B cell (primary cell): ENCODE measurements at regions of chr1 and their contacts with region 1.

Region 1: GRCh38 chr1:156146020-156146768 is 7.2 kb upstream of the SEMA4A start:
- DNase-seq: peak; percentile 83
- ATAC-seq: peak; percentile 66
- H3K4me3 ChIP-seq: peak overlapping the region in 1 of 5 experiments; percentile 15
- H3K4me3 Mint-ChIP-seq: peak overlapping the region; percentile 62
- H3K27ac ChIP-seq: no peak overlapping the region
- H3K27ac Mint-ChIP-seq: peak overlapping the region; percentile 42
- H3K4me1 ChIP-seq: peaks cover 50 to 54% of the 10 kb centered on the region in 2 donors
- H3K4me1 Mint-ChIP-seq: peaks cover 48% of the 10 kb centered on the region
- H3K27me3 ChIP-seq: peaks cover 0 to 10% (median 5%) of the 10 kb centered on the region in 4 experiments
- H3K27me3 Mint-ChIP-seq: peaks cover 8% of the 10 kb centered on the region
- CTCF ChIP-seq: peak; percentile 75

Region 2: DNA sequence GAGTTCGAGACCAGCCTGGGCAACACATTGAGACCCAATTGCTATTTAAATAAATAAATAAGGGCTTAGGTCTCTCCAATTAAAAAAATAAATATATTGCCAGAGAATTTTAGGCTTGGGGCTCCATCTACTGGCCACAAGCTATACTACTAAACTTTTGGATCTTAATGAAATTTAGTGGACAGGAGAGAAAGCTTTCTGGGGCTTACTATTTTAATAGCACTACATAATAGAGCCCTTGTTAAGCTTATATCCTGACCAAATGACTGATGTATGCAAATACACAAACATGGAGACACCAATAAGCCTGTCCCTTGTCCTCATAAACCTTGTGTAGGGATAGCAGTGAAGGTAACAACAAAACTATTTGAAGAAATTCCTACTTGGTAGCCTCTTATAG is 173.5 kb after region 1 on chr1:
- CTCF ChIA-PET with region 1: interaction called, 11 read pairs
- POLR2A ChIA-PET with region 1: no interaction called
- intact Hi-C with region 1: loop called (anchors 10 kb)
- DNase-seq: peak; percentile 47
- ATAC-seq: no peak
- H3K4me3 ChIP-seq: no peak overlapping the region
- H3K4me3 Mint-ChIP-seq: no peak overlapping the region
- H3K27ac ChIP-seq: no peak overlapping the region
- H3K27ac Mint-ChIP-seq: no peak overlapping the region
- H3K4me1 ChIP-seq: no peaks in the 10 kb centered on the region
- H3K4me1 Mint-ChIP-seq: no peaks in the 10 kb centered on the region
- H3K27me3 ChIP-seq: no peaks in the 10 kb centered on the region
- H3K27me3 Mint-ChIP-seq: no peaks in the 10 kb centered on the region
- CTCF ChIP-seq: peak; percentile 73